ENCODE measurements at regions of chr19 and their contacts with region 1.

Region 1: GRCh38 chr19:31160336-31160926 is 188.8 kb downstream of the TSHZ3 start:
- DNase-seq: no peak
- ATAC-seq: no peak
- H3K4me3 ChIP-seq: no peak overlapping the region
- H3K27ac ChIP-seq: no peak overlapping the region
- H3K4me1 ChIP-seq: no peaks in the 10 kb centered on the region
- H3K27me3 ChIP-seq: no peaks in the 10 kb centered on the region
- CTCF ChIP-seq: no peak

Region 2: DNA sequence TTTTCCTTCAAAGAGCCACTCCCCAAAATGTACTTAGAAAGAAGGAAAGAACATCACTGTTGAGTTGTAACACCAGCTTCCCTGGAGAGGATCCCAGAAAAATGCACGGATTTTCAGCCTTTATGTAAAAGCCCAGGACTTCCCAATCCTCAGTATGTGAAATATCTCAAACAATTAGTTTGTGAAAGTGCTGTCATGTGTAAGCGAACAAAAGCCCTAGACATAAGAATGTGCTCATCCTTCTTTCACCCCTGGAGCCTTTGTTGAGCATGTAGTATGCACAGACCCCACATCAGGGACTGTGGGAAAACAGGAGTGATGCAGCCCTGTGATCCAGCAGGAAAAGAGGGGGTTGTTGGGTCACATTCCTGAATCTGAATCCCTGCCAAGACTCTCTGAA is 743.5 kb after region 1 on chr19:
- CTCF ChIA-PET with region 1: no interaction called
- POLR2A ChIA-PET with region 1: no interaction called
- in situ Hi-C with region 1: no loop called
- intact Hi-C with region 1: no loop called
- DNase-seq: no peak
- ATAC-seq: no peak
- H3K4me3 ChIP-seq: no peak overlapping the region
- H3K27ac ChIP-seq: no peak overlapping the region
- H3K4me1 ChIP-seq: no peaks in the 10 kb centered on the region
- H3K27me3 ChIP-seq: no peaks in the 10 kb centered on the region
- CTCF ChIP-seq: no peak

Region 3: DNA sequence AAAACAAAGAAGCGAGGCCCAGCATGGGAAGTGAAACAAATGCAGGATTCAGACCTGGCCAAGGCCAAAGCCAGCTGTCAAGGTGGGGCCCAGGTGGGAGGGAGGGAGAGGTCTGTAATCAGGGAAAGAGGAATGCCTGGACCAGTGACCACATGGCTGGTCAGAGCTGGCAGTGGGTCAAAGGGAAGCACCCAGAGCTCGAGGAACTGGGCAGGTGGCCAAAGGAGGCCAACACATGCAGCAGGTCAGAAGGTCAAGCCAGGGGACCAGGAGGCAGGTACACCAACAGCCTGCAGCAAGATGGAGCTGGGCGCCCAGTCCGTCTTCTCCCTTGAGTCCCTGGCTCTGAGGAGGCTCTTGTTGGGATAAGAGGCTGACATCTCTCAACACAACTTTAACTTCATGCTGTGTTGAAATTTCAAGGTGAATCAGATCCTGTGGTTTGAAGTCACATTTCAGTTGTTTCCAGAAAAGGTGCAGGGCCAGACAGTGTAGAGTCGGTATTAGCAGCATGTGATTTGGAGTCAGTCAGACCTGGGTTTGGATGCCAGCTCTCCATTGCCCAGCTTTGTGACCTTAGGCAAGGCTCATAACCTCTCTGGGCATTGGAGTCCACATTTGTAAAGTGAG is 1937.7 kb after region 1 on chr19:
- CTCF ChIA-PET with region 1: no interaction called
- POLR2A ChIA-PET with region 1: interaction called, 13 read pairs
- in situ Hi-C with region 1: no loop called
- intact Hi-C with region 1: no loop called
- DNase-seq: peak; percentile 95
- ATAC-seq: peak; percentile 66
- H3K4me3 ChIP-seq: no peak overlapping the region
- H3K27ac ChIP-seq: peak overlapping the region; percentile 48
- H3K4me1 ChIP-seq: peaks cover 15% of the 10 kb centered on the region
- H3K27me3 ChIP-seq: no peaks in the 10 kb centered on the region
- CTCF ChIP-seq: no peak

Measured in Panc1 (cell line).